ENCODE measurements at regions of chr11 and their contacts with region 1.

Region 1: DNA sequence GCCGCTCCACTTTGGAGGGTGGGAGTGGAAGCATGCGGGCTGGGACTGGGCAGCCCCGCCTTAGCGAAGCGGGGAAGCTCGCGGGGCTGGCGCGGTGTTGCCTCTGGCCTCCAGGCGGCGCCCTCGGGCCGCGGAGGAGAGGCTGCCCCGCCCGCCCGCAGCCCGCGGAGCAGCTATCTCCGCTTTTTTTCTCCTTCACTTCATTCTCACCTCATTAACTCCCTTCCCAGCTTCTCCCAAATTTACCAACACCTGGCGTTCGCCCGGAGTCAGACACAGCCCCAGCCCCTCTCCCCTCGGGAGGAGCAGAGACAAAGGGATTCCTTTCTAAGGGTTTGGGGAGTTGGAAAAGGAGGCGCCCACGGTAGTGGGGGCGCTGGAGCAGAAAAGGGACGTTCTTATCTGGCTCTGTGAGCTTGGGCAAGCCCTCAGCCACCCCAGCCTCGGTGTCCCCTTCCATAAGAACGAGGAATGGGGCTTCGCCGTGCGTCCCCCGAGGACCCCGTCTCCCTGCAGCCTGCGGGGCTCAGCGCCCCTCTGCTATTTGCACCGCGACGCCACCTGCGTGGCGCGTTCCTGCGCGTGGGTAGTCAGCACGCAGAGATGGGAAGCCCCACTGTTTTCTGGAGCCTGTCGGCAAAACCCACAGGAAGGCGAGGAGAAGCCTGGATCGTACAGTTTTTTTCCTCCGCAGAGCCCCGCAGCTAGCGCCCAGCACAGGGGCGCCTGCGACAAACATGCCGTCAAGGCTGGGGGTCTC is 1.5 kb upstream of the WNT11 start:
- DNase-seq: peak; percentile 71 to 88
- ATAC-seq: peak; percentile 70 to 89 (median 80)
- H3K4me3 ChIP-seq: peak overlapping the region; percentile 45 to 83 (median 70)
- H3K27ac ChIP-seq: peak overlapping the region in 8 of 10 donors; percentile 28 to 79 (median 63)
- H3K4me1 ChIP-seq: peaks cover 2 to 52% (median 40%) of the 10 kb centered on the region in 9 donors
- H3K27me3 ChIP-seq: peaks cover 0 to 90% (median 3%) of the 10 kb centered on the region in 7 donors
- CTCF ChIP-seq: peak; percentile 92 to 99 (median 97)

Region 2: GRCh38 chr11:75896843-75897419 is 310.9 kb before region 1 on chr11:
- intact Hi-C with region 1: loop called in 1 of 10 experiments (anchors 2 kb)
- DNase-seq: no peak
- ATAC-seq: peak in 4 of 8 donors; percentile 29 to 65 (median 49)
- H3K4me3 ChIP-seq: no peak overlapping the region
- H3K27ac ChIP-seq: no peak overlapping the region
- H3K4me1 ChIP-seq: peaks cover 0 to 35% (median 10%) of the 10 kb centered on the region in 9 donors
- H3K27me3 ChIP-seq: no peaks in the 10 kb centered on the region
- CTCF ChIP-seq: peak; percentile 58 to 85 (median 73)

Region 3: GRCh38 chr11:76266270-76267090 is 58.7 kb after region 1 on chr11:
- intact Hi-C with region 1: no loop called
- DNase-seq: no peak
- ATAC-seq: peak in 3 of 8 donors; percentile 12 to 54 (median 29)
- H3K4me3 ChIP-seq: no peak overlapping the region
- H3K27ac ChIP-seq: peak overlapping the region in 6 of 10 donors; percentile 10 to 52 (median 30)
- H3K4me1 ChIP-seq: peaks cover 0 to 24% (median 8%) of the 10 kb centered on the region in 9 donors
- H3K27me3 ChIP-seq: no peaks in the 10 kb centered on the region
- CTCF ChIP-seq: no peak

Region 4: DNA sequence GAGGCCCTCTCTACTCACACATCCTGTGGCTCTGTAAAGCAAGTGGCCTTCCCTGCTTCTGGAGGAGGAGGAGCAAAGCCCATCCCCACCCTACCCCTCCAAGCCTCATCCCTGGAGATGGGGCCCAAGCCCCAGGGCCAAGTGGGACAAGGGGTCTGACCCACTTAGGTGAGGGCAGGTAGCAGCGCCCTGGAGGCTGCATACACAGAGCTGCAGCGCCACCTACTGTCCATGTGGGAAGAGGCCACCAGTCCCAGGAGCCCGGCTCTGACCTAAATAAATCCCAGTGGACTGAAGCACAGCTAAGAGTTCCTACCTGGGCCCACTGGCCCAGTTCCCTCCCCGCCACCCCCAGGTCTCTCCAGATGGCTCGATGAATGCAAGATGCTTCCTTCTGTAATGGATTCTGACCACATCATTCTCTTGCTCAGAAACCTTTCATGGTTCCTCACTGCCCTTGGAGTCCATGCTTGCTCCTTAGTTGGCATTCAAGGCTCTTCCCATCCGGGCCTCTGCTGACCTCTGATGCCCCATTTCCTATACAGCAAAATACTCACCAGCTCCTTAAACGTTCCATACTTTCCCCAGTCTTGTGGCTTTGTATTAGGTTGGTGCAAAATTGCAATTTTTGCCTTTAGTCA is 111.0 kb after region 1 on chr11:
- intact Hi-C with region 1: loop called (anchors 1 to 5 kb)
- DNase-seq: peak; percentile 79 to 83
- ATAC-seq: peak; percentile 83 to 94 (median 88)
- H3K4me3 ChIP-seq: no peak overlapping the region
- H3K27ac ChIP-seq: no peak overlapping the region
- H3K4me1 ChIP-seq: peaks cover 0 to 19% (median 13%) of the 10 kb centered on the region in 9 donors
- H3K27me3 ChIP-seq: peaks cover 0 to 32% (median 19%) of the 10 kb centered on the region in 7 donors
- CTCF ChIP-seq: peak; percentile 80 to 97 (median 90)

Region 5: DNA sequence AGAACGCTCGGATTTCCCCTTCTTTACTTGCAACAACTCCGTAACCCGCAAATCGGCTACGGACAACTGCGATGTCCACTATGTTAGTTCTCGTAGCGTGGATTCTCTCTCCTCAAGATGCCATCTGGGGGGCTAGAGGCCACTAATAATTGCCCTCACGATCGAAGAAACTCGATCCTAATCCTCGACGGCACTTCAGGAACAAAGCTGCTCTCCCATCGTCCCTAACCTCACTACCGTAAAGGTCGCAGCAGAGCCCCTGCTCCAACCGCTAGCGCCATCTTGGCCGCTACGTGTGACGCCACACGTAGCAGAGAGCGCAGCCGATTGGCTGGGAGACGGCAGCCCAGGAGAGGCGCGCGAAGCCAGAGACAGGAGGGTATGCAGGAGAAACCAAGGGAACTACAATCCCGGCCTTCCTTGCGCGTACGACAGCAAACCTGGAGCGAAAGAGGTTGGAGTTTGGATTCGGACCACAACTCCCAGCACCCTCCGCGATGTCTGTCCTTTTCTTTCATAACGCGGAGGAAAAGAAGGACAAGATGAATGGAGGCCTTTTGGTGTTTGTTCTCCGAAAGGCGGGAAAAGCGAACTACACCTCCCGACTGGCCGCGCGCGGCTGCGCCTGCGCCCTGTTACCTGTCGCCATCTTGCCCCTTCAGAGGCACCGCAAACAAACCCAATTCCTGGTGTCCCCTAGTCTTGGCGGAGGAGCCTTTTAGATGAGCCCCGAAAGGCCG is 236.7 kb after region 1 on chr11 and contains the start of gene EMSY:
- intact Hi-C with region 1: loop called in 3 of 10 experiments (anchors 5 to 10 kb)
- DNase-seq: peak; percentile 94 to 98
- ATAC-seq: peak; percentile 96 to 98 (median 97)
- H3K4me3 ChIP-seq: peak within 1 kb of the TSS; percentile 74 to 99 (median 97)
- H3K27ac ChIP-seq: peak within 1 kb of the TSS; percentile 60 to 98 (median 92)
- H3K4me1 ChIP-seq: peaks cover 0 to 35% (median 22%) of the 10 kb centered on the region in 9 donors
- H3K27me3 ChIP-seq: no peaks in the 10 kb centered on the region
- CTCF ChIP-seq: no peak
- total RNA-seq, gene EMSY: 14.2 to 23.4 (median 18.1) TPM

Region 6: DNA sequence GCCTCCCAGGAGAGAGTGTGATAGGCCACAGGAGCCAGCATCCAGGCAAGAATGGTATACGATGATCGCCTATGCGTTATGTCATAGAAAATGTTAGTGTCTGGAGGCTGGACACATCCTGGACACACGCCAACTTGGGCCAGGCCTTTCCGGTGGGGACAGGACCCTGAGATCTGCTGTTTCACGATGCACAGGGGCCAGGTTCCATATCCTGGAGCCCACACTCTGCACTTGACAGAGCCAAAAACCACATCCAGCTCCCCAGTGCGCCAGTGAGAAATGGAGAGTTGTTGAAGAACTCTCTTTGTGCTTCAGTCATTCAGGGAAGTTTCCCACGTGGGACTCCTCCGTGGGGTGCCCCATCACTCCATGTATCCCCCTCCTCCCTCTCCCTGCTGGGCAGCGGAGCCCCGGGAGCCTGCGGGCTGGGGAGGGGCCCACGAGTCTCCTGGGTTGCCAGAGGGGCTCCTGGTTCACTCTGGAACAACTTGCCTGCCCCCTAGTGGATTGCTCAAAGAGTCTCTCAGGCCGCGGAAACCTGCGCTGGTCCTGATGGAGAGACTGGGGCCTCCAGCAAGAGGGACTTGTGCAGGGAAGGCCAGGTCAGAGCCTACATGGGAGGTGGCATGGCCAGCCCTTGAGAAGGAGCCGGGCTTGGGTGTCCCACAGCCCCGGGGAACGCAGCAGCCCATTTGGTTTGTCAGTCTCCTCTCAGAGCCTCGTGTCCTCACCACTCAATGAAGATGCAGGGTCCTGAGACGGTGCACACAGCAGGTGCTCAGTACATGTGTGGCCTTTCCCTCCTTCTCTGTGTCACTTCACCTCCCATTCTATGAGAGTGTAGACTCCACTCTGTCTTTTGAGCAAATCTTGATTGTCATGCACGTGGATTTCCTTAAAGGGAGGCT is 472.9 kb after region 1 on chr11:
- intact Hi-C with region 1: loop called in 1 of 10 experiments (anchors 10 kb)
- DNase-seq: peak; percentile 66 to 87
- ATAC-seq: peak; percentile 79 to 91 (median 84)
- H3K4me3 ChIP-seq: no peak overlapping the region
- H3K27ac ChIP-seq: peak overlapping the region in 1 of 10 donors; percentile 5
- H3K4me1 ChIP-seq: peaks cover 0 to 21% (median 9%) of the 10 kb centered on the region in 9 donors
- H3K27me3 ChIP-seq: no peaks in the 10 kb centered on the region
- CTCF ChIP-seq: peak; percentile 78 to 96 (median 90)